ENCODE measurements at regions of chr22 and their contacts with region 1.

Region 1: DNA sequence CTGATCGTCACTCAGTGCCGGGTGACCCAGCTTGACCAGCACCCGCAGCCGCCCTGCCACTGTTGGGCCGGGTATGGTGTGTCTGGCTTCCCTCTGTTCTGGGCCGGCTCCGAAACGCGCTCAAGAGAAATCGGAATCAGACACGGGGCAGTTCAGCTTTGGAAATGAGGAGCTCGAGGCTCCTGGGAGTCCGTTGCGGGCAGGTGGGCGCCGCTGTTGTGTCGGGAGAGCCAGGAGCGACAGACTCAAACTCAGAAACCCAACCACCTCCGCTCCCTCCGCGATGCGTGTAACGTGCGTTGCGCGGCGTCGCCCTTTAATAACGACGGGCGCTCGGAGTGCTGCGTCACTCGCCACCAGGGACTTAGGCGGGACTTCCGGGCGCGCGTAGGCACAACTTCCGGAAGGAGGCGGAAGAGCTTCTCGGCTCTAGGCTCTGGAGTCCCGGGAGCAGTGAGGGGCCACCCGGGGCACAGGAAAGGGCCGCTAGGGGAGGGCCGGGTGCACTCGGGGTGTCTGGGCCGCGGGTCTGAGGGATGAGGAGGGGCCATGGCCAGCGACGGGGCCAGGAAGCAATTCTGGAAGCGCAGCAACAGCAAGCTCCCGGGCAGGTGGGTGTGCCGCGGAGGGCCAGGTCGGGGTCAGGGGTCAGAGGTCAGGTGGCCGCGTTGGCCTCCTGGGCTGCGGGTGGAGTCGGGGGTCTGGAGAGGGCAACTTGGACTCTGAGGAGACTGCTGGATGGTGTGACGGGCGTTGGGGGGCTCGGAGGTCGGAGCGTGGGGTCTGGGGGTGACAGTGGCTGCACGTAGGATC is at the start of gene TBC1D22A:
- DNase-seq: peak; percentile 94
- ATAC-seq: peak; percentile 85
- H3K4me3 Mint-ChIP-seq: peak within 1 kb of the TSS; percentile 100
- H3K27ac Mint-ChIP-seq: peak within 1 kb of the TSS; percentile 99
- H3K4me1 Mint-ChIP-seq: peaks cover 44% of the 10 kb centered on the region
- H3K27me3 Mint-ChIP-seq: no peaks in the 10 kb centered on the region
- total RNA-seq, gene TBC1D22A: 47.2 to 49.1 TPM

Region 2: GRCh38 chr22:46737976-46738646 is 24.3 kb before region 1 on chr22 and contains the start of gene CERK:
- POLR2A ChIA-PET with region 1: interaction called, 13 read pairs
- DNase-seq: peak; percentile 75
- ATAC-seq: peak; percentile 57
- H3K4me3 Mint-ChIP-seq: peak within 1 kb of the TSS; percentile 100
- H3K27ac Mint-ChIP-seq: peak within 1 kb of the TSS; percentile 96
- H3K4me1 Mint-ChIP-seq: peaks cover 34% of the 10 kb centered on the region
- H3K27me3 Mint-ChIP-seq: no peaks in the 10 kb centered on the region
- total RNA-seq, gene CERK: 90.8 to 94.9 TPM

Region 3: DNA sequence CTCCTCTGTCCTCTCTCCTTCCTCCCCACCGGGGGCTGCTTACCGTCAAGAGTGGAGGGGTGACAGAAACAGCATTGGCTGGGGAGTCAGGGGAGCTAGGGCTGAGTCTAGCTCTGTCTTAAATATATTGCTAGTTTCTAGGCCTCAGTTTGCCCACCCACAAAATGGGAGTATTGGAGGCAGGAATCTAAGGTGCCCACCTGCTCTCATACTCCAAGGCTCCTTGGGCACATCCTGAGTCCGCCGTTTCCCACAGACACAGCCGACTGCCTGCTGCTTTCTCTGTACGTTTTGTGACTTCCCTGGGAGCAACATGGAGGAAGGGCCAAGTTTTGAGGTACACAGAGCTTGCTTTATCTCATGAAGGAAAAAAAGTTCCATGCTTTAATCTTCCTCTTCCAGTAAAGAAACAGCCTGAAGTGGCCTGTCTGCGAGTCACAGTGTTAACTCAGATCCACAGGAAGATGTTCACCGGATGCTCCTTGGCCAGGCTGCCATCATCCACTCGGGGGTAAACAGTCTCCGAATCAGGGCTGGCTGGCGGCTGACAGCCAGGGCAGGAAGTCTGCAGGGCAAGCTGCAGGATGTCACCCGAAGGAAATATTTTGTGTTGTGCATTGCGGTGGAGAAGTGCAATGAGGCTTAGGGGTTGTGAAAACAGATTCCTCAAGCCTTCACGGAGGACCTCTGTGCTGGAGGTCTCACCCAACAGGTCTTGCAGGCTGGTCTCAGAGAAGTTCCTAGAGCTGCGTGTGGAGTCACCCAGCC is 13.4 kb before region 1 on chr22:
- POLR2A ChIA-PET with region 1: interaction called, 55 read pairs
- DNase-seq: peak; percentile 68
- ATAC-seq: peak; percentile 97
- H3K4me3 Mint-ChIP-seq: peak overlapping the region; percentile 71
- H3K27ac Mint-ChIP-seq: peak overlapping the region; percentile 97
- H3K4me1 Mint-ChIP-seq: peaks cover 22% of the 10 kb centered on the region
- H3K27me3 Mint-ChIP-seq: peaks cover 3% of the 10 kb centered on the region

Region 4: DNA sequence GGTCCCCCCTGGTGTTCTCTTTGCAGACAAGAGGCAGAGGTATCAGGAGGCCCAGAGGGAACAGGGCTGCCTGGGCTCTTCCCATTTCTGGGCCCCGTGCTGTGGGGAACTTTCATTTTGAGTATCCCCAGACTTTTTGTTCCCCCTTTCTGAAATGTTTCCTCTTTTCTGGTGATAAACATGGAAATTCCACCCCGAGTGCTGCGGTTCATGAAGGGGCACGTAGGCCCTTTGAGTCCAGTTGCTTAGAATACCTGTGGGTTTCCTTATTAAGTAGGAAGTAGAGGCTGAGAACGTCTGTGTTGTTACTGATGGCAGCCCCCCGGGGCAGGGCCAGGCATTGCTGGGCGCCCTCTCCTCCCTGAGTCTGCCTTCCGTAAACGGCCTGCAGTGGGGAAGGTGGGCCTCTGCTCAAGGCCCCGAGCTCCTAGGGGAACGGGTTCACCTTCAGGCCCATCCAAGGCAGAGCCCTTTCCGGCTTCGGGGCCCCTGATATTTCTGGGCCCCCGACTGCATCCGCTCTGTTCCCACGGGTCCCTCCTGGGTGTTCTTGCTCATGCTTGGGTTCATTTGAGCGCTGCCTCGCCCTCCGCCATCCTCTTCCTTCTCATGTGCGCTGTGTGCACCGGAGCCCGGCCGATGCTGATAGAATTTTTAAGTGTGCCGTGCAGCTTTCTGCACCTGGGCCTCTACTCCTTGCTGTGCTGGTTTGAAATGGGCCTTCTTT is 12.0 kb after region 1 on chr22:
- POLR2A ChIA-PET with region 1: interaction called, 64 read pairs
- DNase-seq: no peak
- ATAC-seq: peak; percentile 48
- H3K4me3 Mint-ChIP-seq: peak overlapping the region; percentile 88
- H3K27ac Mint-ChIP-seq: peak overlapping the region; percentile 94
- H3K4me1 Mint-ChIP-seq: peaks cover 64% of the 10 kb centered on the region
- H3K27me3 Mint-ChIP-seq: no peaks in the 10 kb centered on the region

Region 5: GRCh38 chr22:46791201-46791731 is 28.8 kb after region 1 on chr22:
- POLR2A ChIA-PET with region 1: interaction called, 43 read pairs
- DNase-seq: peak; percentile 73
- ATAC-seq: peak; percentile 97
- H3K4me3 Mint-ChIP-seq: peak overlapping the region; percentile 85
- H3K27ac Mint-ChIP-seq: peak overlapping the region; percentile 99
- H3K4me1 Mint-ChIP-seq: peaks cover 42% of the 10 kb centered on the region
- H3K27me3 Mint-ChIP-seq: no peaks in the 10 kb centered on the region

Region 6: DNA sequence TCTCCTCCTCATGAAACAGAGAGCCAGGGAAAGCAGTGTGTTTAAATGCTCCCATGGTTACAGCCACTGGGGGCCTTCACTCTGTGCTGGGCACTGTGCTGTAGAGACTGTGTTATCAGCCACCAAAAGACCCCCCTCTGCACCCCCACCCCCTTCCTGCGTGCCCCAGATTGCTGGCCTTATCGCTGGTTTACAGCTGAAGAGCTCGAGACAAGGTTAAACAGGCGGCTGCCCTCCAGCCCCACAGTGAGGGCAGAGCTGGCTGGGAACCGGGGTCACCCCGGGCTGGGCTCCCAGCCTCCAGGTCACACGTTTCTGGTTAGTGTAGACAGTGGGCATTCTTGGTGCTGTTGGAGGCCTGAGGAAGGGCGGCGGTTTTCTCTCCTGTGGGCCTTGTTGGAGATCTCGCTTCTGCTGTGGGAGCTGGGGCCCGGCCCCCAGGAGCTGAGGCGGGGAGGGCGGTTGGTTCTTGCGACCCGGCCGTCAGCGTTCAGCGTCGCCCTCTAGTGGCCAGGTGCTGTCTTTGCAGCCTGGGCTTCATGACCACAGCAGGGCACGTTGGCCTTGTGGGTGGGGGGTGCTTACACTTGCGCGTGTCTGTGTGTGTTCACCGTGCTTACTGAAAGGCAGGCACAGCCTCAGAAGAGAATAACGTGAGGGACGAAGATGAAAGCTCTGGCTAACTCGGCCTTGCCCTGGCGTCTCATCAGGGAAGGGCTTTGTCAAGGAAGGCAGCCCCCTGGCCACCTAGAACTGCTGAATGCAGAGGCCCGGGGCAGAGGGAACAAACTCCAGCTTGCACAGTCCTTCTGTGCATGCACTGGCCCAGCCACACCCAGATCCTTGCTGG is 40.8 kb after region 1 on chr22:
- POLR2A ChIA-PET with region 1: interaction called, 18 read pairs
- DNase-seq: peak; percentile 77
- ATAC-seq: peak; percentile 60
- H3K4me3 Mint-ChIP-seq: no peak overlapping the region
- H3K27ac Mint-ChIP-seq: peak overlapping the region; percentile 54
- H3K4me1 Mint-ChIP-seq: peaks cover 35% of the 10 kb centered on the region
- H3K27me3 Mint-ChIP-seq: no peaks in the 10 kb centered on the region

Region 7: GRCh38 chr22:46815896-46816731 is 53.7 kb after region 1 on chr22:
- POLR2A ChIA-PET with region 1: no interaction called
- DNase-seq: no peak
- ATAC-seq: peak; percentile 50
- H3K4me3 Mint-ChIP-seq: no peak overlapping the region
- H3K27ac Mint-ChIP-seq: no peak overlapping the region
- H3K4me1 Mint-ChIP-seq: peaks cover 13% of the 10 kb centered on the region
- H3K27me3 Mint-ChIP-seq: no peaks in the 10 kb centered on the region